OCI-LY7 (cell line): ENCODE measurements at regions of chr10 and their contacts with region 1.

Region 1: GRCh38 chr10:60237977-60238758 is 151.5 kb downstream of the ANK3 start:
- DNase-seq: peak; percentile 85
- H3K4me3 ChIP-seq: peak overlapping the region; percentile 63
- H3K27ac ChIP-seq: peak overlapping the region; percentile 99
- H3K4me1 ChIP-seq: peaks cover 61% of the 10 kb centered on the region
- CTCF ChIP-seq: peak; percentile 88

Region 2: GRCh38 chr10:59625721-59626522 is 612.2 kb before region 1 on chr10:
- CTCF ChIA-PET with region 1: no interaction called
- POLR2A ChIA-PET with region 1: no interaction called
- intact Hi-C with region 1: loop called (anchors 1 kb)
- DNase-seq: peak; percentile 73
- H3K4me3 ChIP-seq: no peak overlapping the region
- H3K27ac ChIP-seq: no peak overlapping the region
- H3K4me1 ChIP-seq: no peaks in the 10 kb centered on the region
- CTCF ChIP-seq: peak; percentile 94

Region 3: DNA sequence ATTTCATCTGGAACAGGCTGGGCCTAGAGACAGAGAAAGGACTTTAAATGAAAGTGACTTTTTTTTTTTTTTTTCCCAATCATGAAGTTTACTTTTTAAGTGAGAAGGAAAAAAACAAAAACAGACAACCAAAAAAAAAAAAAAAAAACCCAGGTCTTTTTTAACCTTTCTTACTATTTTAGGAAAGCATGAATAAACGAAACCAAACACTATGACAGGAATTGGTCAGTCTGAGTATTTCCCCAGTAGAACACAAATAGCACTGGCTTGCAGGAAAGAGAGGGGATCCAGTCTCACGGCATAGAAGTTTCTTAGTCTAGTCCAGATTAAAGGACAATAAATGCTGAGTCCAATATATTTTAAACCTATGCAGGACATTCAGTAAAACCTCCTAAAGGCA is 151.3 kb before region 1 on chr10:
- CTCF ChIA-PET with region 1: no interaction called
- POLR2A ChIA-PET with region 1: no interaction called
- intact Hi-C with region 1: no loop called
- DNase-seq: no peak
- H3K4me3 ChIP-seq: no peak overlapping the region
- H3K27ac ChIP-seq: no peak overlapping the region
- H3K4me1 ChIP-seq: no peaks in the 10 kb centered on the region
- CTCF ChIP-seq: no peak

Region 4: DNA sequence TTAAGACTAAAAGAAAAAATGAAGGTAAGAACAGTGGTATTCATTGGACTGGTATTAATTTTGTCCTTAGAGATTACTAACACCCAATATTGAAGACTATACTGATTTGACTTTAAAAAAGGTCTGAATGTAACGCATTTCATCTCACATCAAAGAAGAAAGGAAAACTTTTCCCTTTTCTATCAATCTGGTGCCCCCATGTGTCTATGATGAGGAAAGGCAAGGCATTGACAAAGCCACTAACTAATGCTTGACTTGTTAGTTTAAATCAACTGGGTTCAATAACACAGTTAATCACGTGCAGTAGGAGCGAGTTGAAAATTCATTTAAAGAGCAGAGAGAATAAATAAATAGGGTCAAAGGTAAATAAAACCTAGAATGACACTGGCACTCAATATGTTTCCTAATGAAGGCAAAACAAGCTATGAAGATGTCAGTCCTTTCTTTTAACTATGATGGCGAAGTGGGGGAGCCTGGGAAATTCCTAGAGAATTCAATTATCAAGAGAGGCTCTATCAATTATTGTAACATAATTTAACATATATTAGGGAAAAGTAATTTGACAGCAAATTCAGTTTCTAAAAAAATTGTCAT is 29.4 kb before region 1 on chr10:
- CTCF ChIA-PET with region 1: interaction called, 7 read pairs
- POLR2A ChIA-PET with region 1: interaction called, 25 read pairs
- intact Hi-C with region 1: loop called (anchors 2 kb)
- DNase-seq: peak; percentile 48
- H3K4me3 ChIP-seq: no peak overlapping the region
- H3K27ac ChIP-seq: no peak overlapping the region
- H3K4me1 ChIP-seq: peaks cover 22% of the 10 kb centered on the region
- CTCF ChIP-seq: peak; percentile 91

Region 5: GRCh38 chr10:60267802-60268201 is 29.6 kb after region 1 on chr10:
- CTCF ChIA-PET with region 1: interaction called, 3 read pairs
- POLR2A ChIA-PET with region 1: interaction called, 6 read pairs
- intact Hi-C with region 1: loop called (anchors 2 kb)
- DNase-seq: peak; percentile 4
- H3K4me3 ChIP-seq: no peak overlapping the region
- H3K27ac ChIP-seq: no peak overlapping the region
- H3K4me1 ChIP-seq: peaks cover 39% of the 10 kb centered on the region
- CTCF ChIP-seq: no peak

Region 6: GRCh38 chr10:60646966-60647796 is 409.0 kb after region 1 on chr10:
- CTCF ChIA-PET with region 1: no interaction called
- POLR2A ChIA-PET with region 1: interaction called, 9 read pairs
- intact Hi-C with region 1: loop called (anchors 1 kb)
- DNase-seq: peak; percentile 63
- H3K4me3 ChIP-seq: no peak overlapping the region
- H3K27ac ChIP-seq: no peak overlapping the region
- H3K4me1 ChIP-seq: peaks cover under 1% of the 10 kb centered on the region
- CTCF ChIP-seq: peak; percentile 93